ENCODE measurements at regions of chr20 and their contacts with region 1.

Region 1: DNA sequence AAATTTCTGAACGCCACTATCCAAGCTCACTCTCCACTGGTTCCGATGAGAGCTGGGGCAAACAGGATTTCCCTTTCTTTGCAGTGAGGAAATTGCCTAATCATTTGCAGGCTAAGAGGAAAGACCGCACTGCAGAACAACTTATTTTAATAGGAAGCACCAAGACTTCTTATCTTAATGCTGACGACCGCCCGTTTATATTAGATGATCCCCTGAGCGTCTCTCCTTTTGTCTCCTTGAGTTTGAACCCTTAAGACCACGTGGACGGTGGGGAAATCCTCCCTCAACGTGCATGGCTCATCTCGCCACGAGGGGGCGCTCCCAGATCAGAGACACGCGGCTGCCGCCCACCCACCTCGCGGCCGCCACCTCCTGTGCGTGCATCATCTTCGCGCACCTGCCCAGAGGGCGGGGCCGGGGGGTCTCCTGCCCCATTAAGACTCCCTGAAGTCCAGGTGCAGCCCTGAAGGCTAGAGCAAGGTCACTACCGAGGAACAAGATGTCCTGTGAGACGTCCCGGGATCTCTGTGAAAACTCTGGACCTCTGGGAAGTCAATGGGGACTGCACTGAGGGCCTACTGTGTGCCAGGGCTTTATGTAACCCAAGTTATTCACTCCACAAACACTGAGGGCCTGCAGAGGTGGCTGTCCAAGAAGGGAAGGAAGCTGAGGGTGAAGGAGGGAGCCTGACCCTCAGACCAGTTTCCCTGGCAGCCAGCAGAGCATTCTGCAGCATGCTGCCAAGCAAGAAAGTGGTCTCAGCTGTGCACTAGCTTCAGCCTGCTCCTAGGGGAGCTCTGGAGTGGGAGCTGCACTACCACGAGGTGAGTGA is 28.1 kb downstream of the PDYN start:
- DNase-seq: peak; percentile 63
- H3K4me3 ChIP-seq: peak overlapping the region in 1 of 3 experiments; percentile 30
- H3K27ac ChIP-seq: no peak overlapping the region
- H3K4me1 ChIP-seq: peaks cover 4% of the 10 kb centered on the region
- H3K27me3 ChIP-seq: peaks cover 15 to 18% of the 10 kb centered on the region in 2 experiments
- CTCF ChIP-seq: peak; percentile 92 to 94
- POLR2A ChIP-seq: no peak

Region 2: GRCh38 chr20:1674361-1674760 is 291.4 kb before region 1 on chr20:
- CTCF ChIA-PET with region 1: no interaction called
- POLR2A ChIA-PET with region 1: no interaction called
- dilution Hi-C with region 1: no loop called
- intact Hi-C with region 1: no loop called
- DNase-seq: no peak
- H3K4me3 ChIP-seq: no peak overlapping the region
- H3K27ac ChIP-seq: no peak overlapping the region
- H3K4me1 ChIP-seq: no peaks in the 10 kb centered on the region
- H3K27me3 ChIP-seq: peaks cover 6 to 13% of the 10 kb centered on the region in 2 experiments
- CTCF ChIP-seq: no peak
- POLR2A ChIP-seq: no peak

Region 3: DNA sequence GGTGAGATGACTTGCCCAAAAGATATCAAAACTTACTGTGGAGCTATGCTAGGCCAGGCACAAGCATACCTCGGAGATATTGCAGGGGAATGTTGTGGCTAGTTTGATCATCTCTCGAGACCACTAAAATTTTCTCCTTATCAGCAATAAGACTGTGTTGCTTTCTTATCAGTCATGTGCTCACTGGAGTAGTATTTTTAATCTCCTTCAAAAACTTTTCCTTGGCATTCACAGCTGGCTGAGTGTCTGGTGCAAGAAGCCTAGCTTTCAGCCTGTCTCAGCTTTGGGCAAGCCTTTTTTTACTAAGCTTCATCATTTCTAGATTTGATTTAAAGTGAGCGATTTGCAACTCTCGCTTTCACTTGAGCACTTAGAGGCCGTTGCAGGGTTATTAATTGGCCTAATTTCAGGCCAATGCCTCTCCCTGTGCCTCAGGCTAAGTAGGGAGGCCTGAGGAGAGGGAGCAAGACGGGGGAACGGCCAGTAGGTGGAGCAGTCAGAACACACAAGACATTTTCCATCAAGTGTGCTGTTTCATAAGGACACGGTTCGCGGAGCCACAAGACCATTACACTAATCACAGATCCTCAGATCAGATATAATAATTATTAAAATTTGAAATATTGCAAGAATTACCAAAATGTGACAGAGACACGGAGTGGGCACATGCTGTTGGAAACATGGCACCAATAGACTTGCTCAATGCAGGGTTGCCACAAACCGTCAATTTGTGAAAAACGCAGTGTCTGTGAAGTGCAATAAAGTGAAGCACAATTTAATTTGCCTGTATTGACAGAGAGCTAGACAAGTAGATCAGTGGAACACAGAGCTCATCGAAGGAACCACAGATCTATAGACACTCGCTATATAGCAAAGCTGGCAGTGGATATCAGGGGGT is 201.4 kb before region 1 on chr20:
- CTCF ChIA-PET with region 1: interaction called, 6 read pairs
- POLR2A ChIA-PET with region 1: no interaction called
- dilution Hi-C with region 1: no loop called
- intact Hi-C with region 1: loop called (anchors 1 kb)
- DNase-seq: peak; percentile 76
- H3K4me3 ChIP-seq: no peak overlapping the region
- H3K27ac ChIP-seq: no peak overlapping the region
- H3K4me1 ChIP-seq: peaks cover 3% of the 10 kb centered on the region
- H3K27me3 ChIP-seq: no peaks in the 10 kb centered on the region
- CTCF ChIP-seq: peak; percentile 84 to 86
- POLR2A ChIP-seq: no peak

Region 4: GRCh38 chr20:1953621-1954020 is 12.1 kb before region 1 on chr20:
- CTCF ChIA-PET with region 1: interaction called, 23 read pairs
- POLR2A ChIA-PET with region 1: no interaction called
- dilution Hi-C with region 1: no loop called
- intact Hi-C with region 1: no loop called
- DNase-seq: no peak
- H3K4me3 ChIP-seq: no peak overlapping the region
- H3K27ac ChIP-seq: no peak overlapping the region
- H3K4me1 ChIP-seq: no peaks in the 10 kb centered on the region
- H3K27me3 ChIP-seq: peaks cover 10% of the 10 kb centered on the region in 2 experiments
- CTCF ChIP-seq: no peak
- POLR2A ChIP-seq: no peak